ENCODE measurements at regions of chr5 and their contacts with region 1.

Region 1: GRCh38 chr5:95076395-95077185 is 208.3 kb downstream of the MCTP1 start:
- DNase-seq: no peak

Region 2: GRCh38 chr5:95134326-95134725 is 57.7 kb after region 1 on chr5:
- intact Hi-C with region 1: loop called (anchors 2 kb)
- DNase-seq: no peak